Motor neuron (in vitro differentiated cells): ENCODE measurements at regions of chrX and their contacts with region 1.

Region 1: DNA sequence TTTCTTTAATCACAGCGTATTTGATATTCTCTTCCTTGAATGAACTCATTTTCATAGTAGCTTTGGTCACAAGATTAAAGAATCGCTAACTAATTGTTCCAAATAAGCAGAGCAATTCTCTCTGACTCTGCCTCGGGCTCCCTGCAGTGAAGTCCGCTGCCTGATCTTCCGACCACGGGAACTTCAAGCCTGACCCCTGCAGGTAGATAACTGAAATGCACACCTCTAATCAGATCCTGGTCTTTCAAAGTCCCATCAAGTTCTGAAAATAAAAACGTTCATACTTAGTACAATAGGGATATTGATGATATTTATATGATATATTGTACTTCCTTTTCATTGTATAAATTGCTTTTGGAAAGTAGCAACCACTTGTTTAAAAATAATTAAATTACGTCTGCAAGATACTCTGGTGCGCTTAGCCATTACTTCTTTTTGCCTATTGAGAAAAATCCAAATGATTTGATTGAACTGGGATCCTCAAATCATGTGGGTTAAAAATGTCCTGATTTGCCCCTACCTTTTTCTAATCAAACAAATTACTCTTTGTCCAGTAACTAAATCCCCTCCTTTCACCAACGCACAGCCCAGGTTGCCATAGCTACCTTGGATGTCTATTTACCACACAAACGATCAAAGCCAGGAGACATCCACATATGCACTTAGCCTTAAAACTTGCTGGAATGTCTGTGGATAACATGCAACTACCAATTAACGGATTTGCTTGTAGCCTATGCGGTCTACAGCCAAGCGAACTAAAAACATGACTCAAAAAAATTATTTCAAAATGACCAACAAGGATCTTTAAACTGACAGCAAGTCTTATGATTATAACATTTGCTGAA is 4.2 kb downstream of the MID1 start:
- ATAC-seq: peak in 5 of 8 experiments; percentile 7 to 34 (median 31)
- H3K4me3 ChIP-seq: peak overlapping the region; percentile 8 to 22 (median 19)
- H3K27ac ChIP-seq: no peak overlapping the region
- H3K4me1 ChIP-seq: peaks cover 26 to 53% of the 10 kb centered on the region in 2 donors

Region 2: GRCh38 chrX:10326578-10326977 is 289.6 kb before region 1 on chrX:
- in situ Hi-C with region 1: loop called in 1 of 9 experiments (anchors 25 kb)
- ATAC-seq: peak in 3 of 8 experiments; percentile 69 to 86 (median 78)
- H3K4me3 ChIP-seq: no peak overlapping the region
- H3K27ac ChIP-seq: no peak overlapping the region
- H3K4me1 ChIP-seq: no peaks in the 10 kb centered on the region